Activated naive CD4-positive, alpha-beta T cell treated with anti-CD3 and anti-CD28 coated beads, Interleukin-2, amount 10 ng/mL, durations not matched to agents 7 days and 5 days (primary cell): ENCODE measurements at regions of chr22 and their contacts with region 1.

Region 1: GRCh38 chr22:41940832-41941765 is 5.9 kb downstream of the CENPM start:
- DNase-seq: peak; percentile 93
- H3K4me3 Mint-ChIP-seq: peak overlapping the region; percentile 49
- H3K27ac Mint-ChIP-seq: peak overlapping the region; percentile 100
- H3K4me1 Mint-ChIP-seq: peaks cover 67% of the 10 kb centered on the region
- H3K27me3 Mint-ChIP-seq: no peaks in the 10 kb centered on the region

Region 2: DNA sequence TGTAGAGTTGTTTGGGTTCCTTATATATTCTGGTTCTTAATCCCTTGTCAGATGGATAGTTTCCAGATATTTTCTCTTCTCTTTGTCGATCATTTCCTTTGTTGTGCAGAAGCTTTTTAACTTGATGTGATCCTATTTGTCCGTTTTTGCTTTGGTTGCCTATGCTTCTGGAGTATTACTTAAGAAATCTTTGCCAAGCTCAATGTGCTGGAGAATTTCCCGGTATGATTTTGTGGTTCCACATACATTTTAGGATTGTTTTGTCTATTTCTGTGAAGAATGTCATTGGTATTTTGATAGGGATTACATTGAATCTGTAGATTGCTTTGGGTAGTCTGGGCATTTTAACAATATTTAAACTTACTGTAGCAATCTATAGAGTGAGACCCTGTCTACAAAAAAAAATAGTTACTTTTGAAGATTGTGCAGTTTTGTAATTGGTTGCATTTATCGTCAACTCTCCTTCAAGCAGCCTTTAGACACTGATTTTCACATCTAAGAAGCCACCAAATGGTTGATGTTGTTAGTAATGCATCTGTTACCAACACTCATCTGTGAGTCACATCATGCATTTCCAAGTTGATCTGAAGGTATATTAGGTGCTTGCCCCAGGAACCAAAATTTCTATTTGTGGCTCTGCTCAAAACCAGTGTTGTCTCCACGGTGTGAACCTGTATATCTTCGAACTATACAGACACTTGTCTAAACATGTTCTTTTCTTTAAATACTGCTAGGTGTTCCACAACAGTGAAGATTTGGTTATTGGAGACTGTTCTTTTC is 298.6 kb before region 1 on chr22:
- CTCF ChIA-PET with region 1: no interaction called
- DNase-seq: no peak
- H3K4me3 Mint-ChIP-seq: no peak overlapping the region
- H3K27ac Mint-ChIP-seq: no peak overlapping the region
- H3K4me1 Mint-ChIP-seq: no peaks in the 10 kb centered on the region
- H3K27me3 Mint-ChIP-seq: no peaks in the 10 kb centered on the region

Region 3: DNA sequence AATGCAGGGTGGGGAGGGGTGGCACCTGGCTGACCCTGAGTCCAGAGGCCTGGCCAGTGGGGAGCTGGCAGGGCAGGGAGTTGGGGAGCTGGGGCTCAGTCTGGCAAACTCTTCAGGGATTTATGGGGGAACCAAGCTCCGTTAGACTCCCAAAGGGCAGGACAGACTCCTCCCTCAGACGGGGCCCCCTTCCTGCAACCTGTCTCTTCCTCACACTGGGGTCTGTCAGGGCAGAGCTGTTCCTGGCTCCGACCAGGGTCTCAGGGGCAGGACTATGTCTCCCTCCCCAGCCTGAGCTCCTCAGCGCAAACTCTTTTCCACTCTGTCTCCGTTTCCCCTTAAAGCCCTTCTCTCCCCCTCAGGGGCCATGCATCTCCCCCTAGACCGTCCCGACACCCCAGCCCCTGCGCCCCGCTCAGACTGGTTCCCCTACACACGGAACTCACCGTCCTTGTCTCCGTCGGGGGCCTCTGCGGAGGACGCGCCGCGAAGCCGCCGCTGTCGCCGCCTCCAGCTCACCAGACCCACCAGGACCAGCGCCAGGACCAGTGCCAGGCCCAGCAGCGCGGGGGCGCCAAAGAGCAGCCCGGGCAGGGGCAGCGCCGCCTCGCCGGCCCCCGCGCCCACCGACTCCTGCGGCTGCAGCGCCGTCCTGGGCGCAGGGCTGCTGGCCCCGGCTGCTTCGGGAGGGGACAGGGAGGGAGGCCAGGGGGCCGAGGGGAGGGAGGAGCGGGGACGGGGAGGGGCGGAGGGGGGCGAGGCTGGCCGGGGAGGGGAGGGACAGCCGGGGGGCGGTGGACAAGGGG is 15.2 kb before region 1 on chr22:
- CTCF ChIA-PET with region 1: interaction called, 24 read pairs
- DNase-seq: peak; percentile 85
- H3K4me3 Mint-ChIP-seq: peak overlapping the region; percentile 60
- H3K27ac Mint-ChIP-seq: no peak overlapping the region
- H3K4me1 Mint-ChIP-seq: peaks cover 8% of the 10 kb centered on the region
- H3K27me3 Mint-ChIP-seq: peaks cover 70% of the 10 kb centered on the region

Region 4: GRCh38 chr22:41966607-41967240 is 25.6 kb after region 1 on chr22:
- CTCF ChIA-PET with region 1: no interaction called
- DNase-seq: peak; percentile 62
- H3K4me3 Mint-ChIP-seq: no peak overlapping the region
- H3K27ac Mint-ChIP-seq: no peak overlapping the region
- H3K4me1 Mint-ChIP-seq: peaks cover 2% of the 10 kb centered on the region
- H3K27me3 Mint-ChIP-seq: peaks cover 52% of the 10 kb centered on the region